Mammary epithelial cell (primary cell): ENCODE measurements at regions of chr11 and their contacts with region 1.

Region 1: DNA sequence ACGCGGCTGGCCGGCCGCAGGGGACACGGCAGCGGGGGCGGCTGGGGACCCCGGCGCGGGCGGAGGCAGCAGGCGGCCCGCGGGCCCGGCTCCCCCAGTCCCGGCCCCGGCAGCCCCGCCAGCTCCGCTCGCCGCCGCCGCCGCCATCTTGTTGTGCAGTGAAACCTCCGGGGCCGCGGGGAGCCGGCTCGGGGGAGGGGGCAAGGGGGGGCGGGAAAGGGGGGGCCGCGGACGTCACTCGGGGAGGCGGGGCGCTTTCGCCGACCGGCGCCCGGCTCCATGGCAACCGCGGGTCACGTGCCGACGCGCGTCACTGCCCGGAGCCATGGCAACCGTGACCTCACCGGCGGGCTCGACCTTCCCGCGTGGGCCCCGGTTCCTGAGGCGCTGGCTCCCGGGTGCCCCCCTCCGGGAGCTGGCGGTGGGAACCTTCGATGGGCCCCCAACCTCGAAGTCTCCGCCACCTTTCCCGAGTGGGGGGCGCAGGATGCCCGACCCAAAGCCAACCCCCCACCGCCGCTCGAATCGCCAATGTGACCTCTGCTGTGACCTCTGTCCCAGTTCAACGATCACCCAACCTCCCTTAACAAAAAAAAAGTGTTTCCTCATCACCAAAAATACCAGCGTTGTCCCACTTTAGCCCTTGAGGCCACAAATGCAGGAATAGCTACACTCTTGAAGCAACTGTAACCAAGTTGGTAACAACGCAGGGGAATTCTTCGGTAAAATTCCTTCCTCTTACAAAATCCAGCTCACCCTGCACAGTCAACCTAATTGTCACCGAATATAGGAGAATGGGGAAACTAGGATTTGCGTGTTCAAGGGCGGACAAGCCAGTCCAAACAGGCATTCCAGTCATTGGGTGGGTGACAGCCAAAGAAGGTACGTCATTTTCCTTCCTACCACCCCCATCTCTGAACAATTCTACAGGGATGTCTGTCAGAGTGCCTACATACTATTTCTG is at the start of gene SIK3:
- DNase-seq: peak; percentile 88
- H3K4me3 ChIP-seq: peak within 1 kb of the TSS; percentile 89 to 94 (median 90)
- H3K27ac ChIP-seq: peak within 1 kb of the TSS; percentile 94
- H3K4me1 ChIP-seq: peaks cover 37% of the 10 kb centered on the region
- H3K27me3 ChIP-seq: no peaks in the 10 kb centered on the region
- CTCF ChIP-seq: peak; percentile 35 to 68
- total RNA-seq, gene SIK3: 22.8 to 36.5 TPM

Region 2: DNA sequence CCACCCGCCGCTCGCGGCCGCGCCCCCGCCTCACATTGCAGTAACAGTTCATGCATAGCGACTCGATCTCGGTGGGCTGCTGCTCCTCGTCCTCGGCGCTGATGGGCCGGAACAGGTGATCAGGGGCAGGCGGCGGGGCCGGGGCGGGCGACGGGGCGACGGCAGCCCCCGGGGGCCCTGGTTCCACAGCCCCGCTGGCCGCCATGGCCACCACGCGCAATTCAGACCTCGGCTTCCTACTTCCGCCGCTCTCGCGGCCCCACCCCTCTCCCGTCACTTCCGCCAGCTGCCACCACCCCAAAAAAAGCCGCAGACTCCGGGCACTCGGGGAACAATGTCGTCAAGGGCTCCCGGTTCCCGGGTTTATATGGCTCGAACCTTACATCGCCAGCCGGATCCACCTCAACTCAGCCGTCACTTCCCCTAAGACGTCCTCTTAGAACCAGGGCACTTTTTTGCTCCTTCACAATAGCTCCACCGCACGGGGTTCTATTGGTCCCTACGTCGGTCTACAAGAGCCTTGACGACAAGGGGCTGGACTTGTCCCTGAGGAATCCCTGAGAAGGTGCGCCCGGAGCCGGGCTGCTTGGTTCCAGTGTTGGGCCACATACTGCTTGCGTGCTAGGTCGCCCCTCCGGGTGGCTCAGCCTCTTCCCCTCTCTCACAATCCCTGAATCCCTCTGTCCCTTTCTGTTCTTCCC is 310.6 kb before region 1 on chr11 and contains the start of gene ZPR1:
- CTCF ChIA-PET with region 1: interaction called, 4 read pairs
- dilution Hi-C with region 1: loop called (anchors 25 kb)
- in situ Hi-C with region 1: loop called (anchors 5 kb)
- intact Hi-C with region 1: no loop called
- DNase-seq: peak; percentile 55
- H3K4me3 ChIP-seq: peak within 1 kb of the TSS; percentile 61 to 83 (median 81)
- H3K27ac ChIP-seq: peak within 1 kb of the TSS; percentile 75
- H3K4me1 ChIP-seq: peaks cover 14% of the 10 kb centered on the region
- H3K27me3 ChIP-seq: no peaks in the 10 kb centered on the region
- CTCF ChIP-seq: no peak
- total RNA-seq, gene ZPR1: 35.7 to 67.9 TPM

Region 3: GRCh38 chr11:116879800-116880625 is 218.5 kb before region 1 on chr11:
- CTCF ChIA-PET with region 1: interaction called, 3 read pairs
- dilution Hi-C with region 1: no loop called
- in situ Hi-C with region 1: loop called in 1 of 2 experiments (anchors 10 kb)
- intact Hi-C with region 1: loop called (anchors 2 kb)
- DNase-seq: peak; percentile 58
- H3K4me3 ChIP-seq: no peak overlapping the region
- H3K27ac ChIP-seq: no peak overlapping the region
- H3K4me1 ChIP-seq: peaks cover 16% of the 10 kb centered on the region
- H3K27me3 ChIP-seq: no peaks in the 10 kb centered on the region
- CTCF ChIP-seq: peak; percentile 78 to 86

Region 4: DNA sequence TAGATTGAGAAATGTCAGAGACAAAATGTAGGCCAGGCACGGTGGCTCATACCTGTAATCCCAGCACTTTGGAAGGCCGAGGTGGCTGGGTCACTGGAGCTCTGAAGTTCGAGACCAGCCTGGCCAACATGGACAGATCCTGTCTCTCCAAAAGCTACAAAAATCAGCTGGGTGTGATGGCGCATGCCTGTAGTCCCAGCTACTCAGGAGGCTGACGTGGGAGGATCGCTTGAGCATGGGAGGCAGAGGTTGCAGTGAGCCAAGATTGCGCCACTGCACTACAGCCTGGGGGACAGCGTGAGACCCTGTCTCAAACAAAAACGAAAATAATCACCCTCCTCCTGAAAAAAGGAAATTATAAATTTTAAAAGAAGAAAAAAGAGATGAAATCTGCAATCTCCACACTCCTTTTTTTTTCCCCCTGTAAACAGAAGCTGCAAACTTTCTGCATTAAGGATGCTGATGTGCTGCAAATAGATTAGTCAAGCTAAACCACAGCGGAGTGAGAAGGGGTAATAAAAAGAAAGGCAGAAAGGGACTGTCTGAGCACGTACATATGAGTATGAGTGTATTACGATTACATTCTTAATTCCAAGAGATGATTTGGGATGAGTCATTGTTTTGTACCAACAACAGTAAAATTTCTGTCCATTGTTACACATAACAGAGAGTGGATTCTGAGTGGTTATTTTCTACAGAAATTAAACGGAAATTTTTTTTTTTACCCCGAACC is 87.6 kb before region 1 on chr11:
- CTCF ChIA-PET with region 1: no interaction called
- dilution Hi-C with region 1: no loop called
- in situ Hi-C with region 1: no loop called
- intact Hi-C with region 1: loop called (anchors 1 kb)
- DNase-seq: peak; percentile 95
- H3K4me3 ChIP-seq: no peak overlapping the region
- H3K27ac ChIP-seq: peak overlapping the region; percentile 94
- H3K4me1 ChIP-seq: peaks cover 22% of the 10 kb centered on the region
- H3K27me3 ChIP-seq: no peaks in the 10 kb centered on the region
- CTCF ChIP-seq: no peak

Region 5: DNA sequence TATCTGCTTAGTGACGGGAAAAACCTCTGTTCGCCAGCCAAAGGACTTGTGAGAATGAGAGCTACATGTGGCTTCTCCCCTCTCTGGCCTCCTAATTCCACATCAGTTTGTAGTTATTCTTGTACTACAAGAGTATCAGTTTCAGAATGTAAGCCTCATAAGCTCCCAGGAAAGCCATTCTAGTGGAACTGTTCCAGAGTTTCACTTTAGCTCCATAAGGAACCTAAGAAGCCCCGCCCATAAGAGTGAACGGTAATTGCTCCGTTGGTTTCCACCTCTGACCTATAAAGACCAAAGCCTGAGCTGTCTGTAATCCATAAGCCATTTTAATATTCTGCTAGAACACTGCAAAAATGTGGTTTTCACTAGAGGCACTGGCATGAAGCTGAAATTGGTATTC is 53.4 kb before region 1 on chr11:
- CTCF ChIA-PET with region 1: no interaction called
- dilution Hi-C with region 1: loop called (anchors 5 kb)
- in situ Hi-C with region 1: no loop called
- intact Hi-C with region 1: loop called (anchors 5 kb)
- DNase-seq: no peak
- H3K4me3 ChIP-seq: no peak overlapping the region
- H3K27ac ChIP-seq: peak overlapping the region; percentile 35
- H3K4me1 ChIP-seq: peaks cover 27% of the 10 kb centered on the region
- H3K27me3 ChIP-seq: no peaks in the 10 kb centered on the region
- CTCF ChIP-seq: no peak